PC-9 (cell line): ENCODE measurements at regions of chr16 and their contacts with region 1.

Region 1: GRCh38 chr16:67816240-67817031 is 9.7 kb downstream of the TSNAXIP1 start:
- DNase-seq: peak in 1 of 2 experiments; percentile 86
- H3K4me3 ChIP-seq: no peak overlapping the region
- H3K27ac ChIP-seq: no peak overlapping the region
- H3K4me1 ChIP-seq: 0 out of 2 replicates have a peak, but pooled peaks cover 4% of the 10 kb centered on the region
- H3K27me3 ChIP-seq: no peaks in the 10 kb centered on the region
- CTCF ChIP-seq: peak; percentile 99

Region 2: GRCh38 chr16:67441271-67441753 is 375.1 kb before region 1 on chr16:
- CTCF ChIA-PET with region 1: no interaction called
- POLR2A ChIA-PET with region 1: no interaction called
- intact Hi-C with region 1: no loop called
- DNase-seq: peak; percentile 8 to 70
- H3K4me3 ChIP-seq: no peak overlapping the region
- H3K27ac ChIP-seq: no peak overlapping the region
- H3K4me1 ChIP-seq: no peaks in the 10 kb centered on the region
- H3K27me3 ChIP-seq: no peaks in the 10 kb centered on the region
- CTCF ChIP-seq: no peak

Region 3: GRCh38 chr16:67594256-67595032 is 222.0 kb before region 1 on chr16:
- CTCF ChIA-PET with region 1: interaction called, 32 read pairs
- POLR2A ChIA-PET with region 1: no interaction called
- intact Hi-C with region 1: no loop called
- DNase-seq: no peak
- H3K4me3 ChIP-seq: no peak overlapping the region
- H3K27ac ChIP-seq: no peak overlapping the region
- H3K4me1 ChIP-seq: no peaks in the 10 kb centered on the region
- H3K27me3 ChIP-seq: no peaks in the 10 kb centered on the region
- CTCF ChIP-seq: no peak

Region 4: GRCh38 chr16:67731753-67732095 is 84.7 kb before region 1 on chr16:
- CTCF ChIA-PET with region 1: no interaction called
- POLR2A ChIA-PET with region 1: no interaction called
- intact Hi-C with region 1: no loop called
- DNase-seq: no peak
- H3K4me3 ChIP-seq: no peak overlapping the region
- H3K27ac ChIP-seq: no peak overlapping the region
- H3K4me1 ChIP-seq: no peaks in the 10 kb centered on the region
- H3K27me3 ChIP-seq: no peaks in the 10 kb centered on the region
- CTCF ChIP-seq: no peak

Region 5: DNA sequence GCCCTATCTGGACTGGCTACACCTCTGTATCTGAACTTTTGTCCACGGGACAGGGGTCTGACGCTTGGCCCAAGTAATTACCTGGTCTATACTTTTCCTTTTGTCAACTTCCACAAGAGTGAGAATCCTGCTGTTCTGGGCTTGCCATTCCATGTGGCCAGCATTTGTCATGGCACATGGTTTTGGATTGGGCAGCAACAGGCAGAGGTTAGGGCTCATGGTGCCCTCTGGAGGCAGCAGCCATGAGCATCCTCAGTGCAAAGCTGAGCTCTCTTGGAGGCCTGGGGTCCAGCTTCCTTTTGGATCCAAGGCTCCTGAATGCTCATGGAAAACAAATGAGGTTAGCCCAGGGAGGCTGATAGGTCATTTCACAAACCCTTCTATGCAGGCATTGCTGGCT is 48.9 kb after region 1 on chr16:
- CTCF ChIA-PET with region 1: interaction called, 6 read pairs
- POLR2A ChIA-PET with region 1: no interaction called
- intact Hi-C with region 1: loop called (anchors 1 kb)
- DNase-seq: peak in 1 of 2 experiments; percentile 48
- H3K4me3 ChIP-seq: no peak overlapping the region
- H3K27ac ChIP-seq: no peak overlapping the region
- H3K4me1 ChIP-seq: peaks cover 13% of the 10 kb centered on the region
- H3K27me3 ChIP-seq: no peaks in the 10 kb centered on the region
- CTCF ChIP-seq: peak; percentile 47; the same call in 1 of the 2 replicates

Region 6: DNA sequence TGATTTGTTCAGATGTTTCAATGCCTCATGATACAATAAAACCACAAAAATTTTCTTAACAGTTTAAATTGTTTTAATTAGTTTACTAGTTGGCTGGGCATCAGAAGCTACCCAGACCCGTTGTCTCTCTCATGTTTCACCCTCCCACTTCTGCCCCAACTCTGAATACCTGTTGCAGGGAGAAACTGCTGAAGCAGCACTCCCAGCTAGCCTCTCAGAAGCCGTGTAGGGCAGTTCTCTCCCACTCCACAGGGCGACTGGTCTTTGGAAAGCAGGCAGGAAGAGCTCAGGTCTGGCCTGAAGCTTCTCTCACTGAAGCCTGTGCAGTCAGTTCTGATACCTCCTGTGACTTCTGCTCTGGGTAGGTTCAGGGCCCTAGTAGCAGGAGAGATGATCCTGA is 54.8 kb after region 1 on chr16:
- CTCF ChIA-PET with region 1: interaction called, 15 read pairs
- POLR2A ChIA-PET with region 1: no interaction called
- intact Hi-C with region 1: no loop called
- DNase-seq: no peak
- H3K4me3 ChIP-seq: no peak overlapping the region
- H3K27ac ChIP-seq: no peak overlapping the region
- H3K4me1 ChIP-seq: peaks cover 11% of the 10 kb centered on the region; the same call in 1 of the 2 replicates
- H3K27me3 ChIP-seq: no peaks in the 10 kb centered on the region
- CTCF ChIP-seq: no peak

Region 7: DNA sequence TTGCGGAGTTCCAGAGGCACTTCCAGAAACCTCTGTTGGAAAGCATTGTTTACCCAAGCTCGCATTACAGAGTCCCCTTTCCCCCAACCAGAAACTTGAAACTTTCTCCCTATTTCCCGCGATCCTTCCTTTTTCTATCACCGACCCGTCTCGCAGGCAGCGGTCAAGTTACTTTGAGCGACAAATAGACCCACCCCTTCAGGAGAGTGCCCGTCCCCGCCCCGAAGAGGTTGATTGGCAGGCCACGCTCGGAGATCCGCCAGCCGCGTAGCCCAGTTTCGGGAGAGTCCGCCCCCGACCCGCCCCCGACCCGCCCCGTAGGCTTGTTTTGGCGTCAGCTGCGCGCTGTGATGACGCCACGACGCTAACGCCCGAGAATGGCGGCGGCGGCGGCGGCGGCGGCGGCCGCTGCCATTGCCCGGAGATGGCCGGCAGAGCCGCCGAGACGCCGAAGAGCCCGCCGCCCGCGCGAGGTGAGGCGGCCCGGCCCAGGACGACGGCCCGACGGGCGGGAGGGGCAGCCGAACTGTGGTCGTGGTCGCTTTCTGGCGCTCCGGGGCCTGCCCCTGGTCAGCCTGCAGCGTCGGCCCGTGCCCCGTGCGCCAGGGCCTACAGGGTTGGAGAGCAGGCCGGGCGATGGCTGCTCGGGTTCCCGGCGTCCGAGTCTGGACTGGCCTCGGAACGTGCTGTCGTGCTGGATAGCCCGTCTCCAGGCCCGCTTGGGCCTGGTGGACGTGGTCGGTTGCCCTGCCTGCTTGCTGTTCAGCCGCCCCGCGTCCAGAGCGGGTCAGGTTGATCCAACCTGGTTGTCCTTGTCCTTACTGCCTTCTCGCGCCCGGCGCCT is 76.7 kb after region 1 on chr16 and contains the start of gene PSKH1:
- CTCF ChIA-PET with region 1: interaction called, 11 read pairs
- POLR2A ChIA-PET with region 1: no interaction called
- intact Hi-C with region 1: no loop called
- DNase-seq: peak; percentile 88 to 91
- H3K4me3 ChIP-seq: peak within 1 kb of the TSS; percentile 98
- H3K27ac ChIP-seq: peak within 1 kb of the TSS; percentile 31
- H3K4me1 ChIP-seq: peaks cover 14% of the 10 kb centered on the region
- H3K27me3 ChIP-seq: no peaks in the 10 kb centered on the region
- CTCF ChIP-seq: no peak
- total RNA-seq, gene PSKH1: 25.8 and 28.4 TPM in 2 replicates

Region 8: DNA sequence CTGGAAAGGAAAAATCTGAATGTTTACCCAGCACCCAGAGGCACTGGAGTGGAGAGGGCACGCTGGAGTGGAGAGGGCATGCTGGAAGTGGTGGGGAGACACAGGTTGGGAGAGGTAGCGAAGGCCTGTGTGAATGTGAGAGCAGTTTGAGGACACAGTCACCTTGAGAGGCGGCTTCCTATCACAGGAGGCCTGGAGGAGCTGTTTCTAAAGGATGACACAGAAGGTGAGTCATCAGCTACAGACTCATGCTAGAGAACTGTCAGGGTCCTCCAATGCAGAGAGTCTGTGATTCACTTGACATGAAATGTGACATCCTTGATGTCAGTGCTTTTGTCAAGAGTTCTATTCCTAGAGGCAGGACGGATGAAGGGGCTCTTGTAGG is 101.4 kb after region 1 on chr16:
- CTCF ChIA-PET with region 1: interaction called, 4 read pairs
- POLR2A ChIA-PET with region 1: interaction called, 11 read pairs
- intact Hi-C with region 1: no loop called
- DNase-seq: no peak
- H3K4me3 ChIP-seq: no peak overlapping the region
- H3K27ac ChIP-seq: no peak overlapping the region
- H3K4me1 ChIP-seq: no peaks in the 10 kb centered on the region
- H3K27me3 ChIP-seq: no peaks in the 10 kb centered on the region
- CTCF ChIP-seq: no peak

Region 9: DNA sequence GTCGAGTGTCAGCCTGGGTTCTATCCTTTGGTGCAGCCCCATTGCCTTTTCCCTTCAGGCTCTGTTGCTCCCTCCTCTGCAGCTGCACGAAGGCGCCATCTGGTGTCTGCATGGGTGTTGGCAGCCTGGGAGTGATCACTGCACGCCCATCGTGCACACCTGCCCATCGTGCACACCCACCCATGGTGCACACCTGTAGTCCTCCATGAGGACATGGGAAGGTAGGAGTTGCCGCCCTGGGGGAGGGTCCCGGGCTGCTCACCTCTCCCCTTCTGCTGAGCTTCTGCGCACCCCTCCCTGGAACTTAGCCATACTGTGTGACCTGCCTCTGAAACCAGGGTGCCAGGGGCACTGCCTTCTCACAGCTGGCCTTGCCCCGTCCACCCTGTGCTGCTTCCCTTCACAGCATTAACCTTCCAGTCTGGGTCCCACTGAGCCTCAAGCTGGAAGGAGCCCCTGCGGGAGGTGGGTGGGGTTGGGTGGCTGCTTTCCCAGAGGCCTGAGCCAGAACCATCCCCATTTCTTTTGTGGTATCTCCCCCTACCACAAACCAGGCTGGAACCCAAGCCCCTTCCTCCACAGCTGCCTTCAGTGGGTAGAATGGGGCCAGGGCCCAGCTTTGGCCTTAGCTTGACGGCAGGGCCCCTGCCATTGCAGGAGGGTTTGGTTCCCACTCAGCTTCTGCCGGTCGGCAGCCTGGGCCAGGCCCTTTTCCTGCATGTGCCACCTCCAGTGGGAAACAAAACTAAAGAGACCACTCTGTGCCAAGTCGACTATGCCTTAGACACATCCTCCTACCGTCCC is 112.3 kb after region 1 on chr16:
- CTCF ChIA-PET with region 1: no interaction called
- POLR2A ChIA-PET with region 1: no interaction called
- intact Hi-C with region 1: loop called (anchors 1 kb)
- DNase-seq: peak in 1 of 2 experiments; percentile 64
- H3K4me3 ChIP-seq: no peak overlapping the region
- H3K27ac ChIP-seq: no peak overlapping the region
- H3K4me1 ChIP-seq: no peaks in the 10 kb centered on the region
- H3K27me3 ChIP-seq: no peaks in the 10 kb centered on the region
- CTCF ChIP-seq: peak; percentile 90